ENCODE measurements at regions of chr22 and their contacts with region 1.

Region 1: GRCh38 chr22:29820961-29821789 is 16.9 kb downstream of the ASCC2 start:
- DNase-seq: peak; percentile 92
- H3K4me3 Mint-ChIP-seq: peak overlapping the region; percentile 9
- H3K27ac Mint-ChIP-seq: peak overlapping the region; percentile 70
- H3K4me1 Mint-ChIP-seq: peaks cover 16% of the 10 kb centered on the region
- H3K27me3 Mint-ChIP-seq: no peaks in the 10 kb centered on the region
- CTCF ChIP-seq: no peak

Region 2: DNA sequence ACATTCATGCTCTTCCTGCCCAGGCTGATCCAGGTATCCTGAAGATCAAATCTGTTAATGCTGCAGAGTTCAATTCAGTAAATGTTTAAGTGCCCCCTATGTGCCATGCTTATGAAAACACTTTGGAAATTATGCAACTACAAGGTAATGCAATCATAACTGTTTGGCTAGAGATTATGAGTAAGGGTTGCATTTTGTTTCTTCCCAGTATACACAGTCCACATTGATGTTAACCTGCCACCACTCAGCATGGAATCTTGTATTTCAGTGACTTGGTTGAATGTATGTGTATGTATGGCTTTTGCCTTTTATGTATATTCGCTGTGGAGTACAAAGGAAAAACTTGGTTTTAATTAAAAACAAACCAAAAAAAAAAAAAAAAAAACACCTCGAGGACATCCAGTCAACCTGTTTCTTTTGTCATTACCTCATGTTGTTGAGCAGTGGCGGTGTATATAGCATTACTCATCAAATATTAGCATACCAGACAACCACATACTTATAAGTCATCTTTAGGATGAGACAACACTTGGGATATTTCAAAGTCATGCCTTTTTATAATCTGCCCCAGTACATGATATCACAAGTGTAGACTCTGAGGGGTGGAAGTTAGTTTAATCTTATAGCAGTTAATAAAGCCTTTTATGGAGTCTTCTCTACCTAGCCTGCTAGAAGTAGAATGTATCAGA is 173.0 kb after region 1 on chr22:
- CTCF ChIA-PET with region 1: no interaction called
- POLR2A ChIA-PET with region 1: interaction called, 6 read pairs
- intact Hi-C with region 1: loop called (anchors 1 kb)
- DNase-seq: peak; percentile 78
- H3K4me3 Mint-ChIP-seq: no peak overlapping the region
- H3K27ac Mint-ChIP-seq: peak overlapping the region; percentile 86
- H3K4me1 Mint-ChIP-seq: peaks cover 31% of the 10 kb centered on the region
- H3K27me3 Mint-ChIP-seq: no peaks in the 10 kb centered on the region
- CTCF ChIP-seq: peak; percentile 34